ENCODE measurements at regions of chr12 and their contacts with region 1.

Region 1: GRCh38 chr12:56636675-56637540 is 6.8 kb upstream of the BAZ2A start:
- DNase-seq: peak; percentile 98
- ATAC-seq: peak; percentile 63
- H3K4me3 ChIP-seq: peak overlapping the region; percentile 90
- H3K27ac ChIP-seq: peak overlapping the region; percentile 83
- H3K4me1 ChIP-seq: peaks cover 36% of the 10 kb centered on the region
- H3K27me3 ChIP-seq: no peaks in the 10 kb centered on the region
- CTCF ChIP-seq: peak; percentile 81

Region 2: GRCh38 chr12:56521590-56522371 is 115.1 kb before region 1 on chr12 and contains the start of gene RBMS2:
- CTCF ChIA-PET with region 1: interaction called, 8 read pairs
- POLR2A ChIA-PET with region 1: interaction called, 11 read pairs
- intact Hi-C with region 1: no loop called
- DNase-seq: peak; percentile 89
- ATAC-seq: peak; percentile 66
- H3K4me3 ChIP-seq: peak within 1 kb of the TSS; percentile 72
- H3K27ac ChIP-seq: peak within 1 kb of the TSS; percentile 64
- H3K4me1 ChIP-seq: peaks cover 60% of the 10 kb centered on the region
- H3K27me3 ChIP-seq: no peaks in the 10 kb centered on the region
- CTCF ChIP-seq: no peak
- total RNA-seq, gene RBMS2: 10.2 and 11.5 TPM in 2 replicates

Region 3: GRCh38 chr12:56622535-56622934 is 14.4 kb before region 1 on chr12:
- CTCF ChIA-PET with region 1: interaction called, 15 read pairs
- POLR2A ChIA-PET with region 1: no interaction called
- intact Hi-C with region 1: no loop called
- DNase-seq: no peak
- ATAC-seq: no peak
- H3K4me3 ChIP-seq: no peak overlapping the region
- H3K27ac ChIP-seq: no peak overlapping the region
- H3K4me1 ChIP-seq: no peaks in the 10 kb centered on the region
- H3K27me3 ChIP-seq: no peaks in the 10 kb centered on the region
- CTCF ChIP-seq: no peak

Region 4: DNA sequence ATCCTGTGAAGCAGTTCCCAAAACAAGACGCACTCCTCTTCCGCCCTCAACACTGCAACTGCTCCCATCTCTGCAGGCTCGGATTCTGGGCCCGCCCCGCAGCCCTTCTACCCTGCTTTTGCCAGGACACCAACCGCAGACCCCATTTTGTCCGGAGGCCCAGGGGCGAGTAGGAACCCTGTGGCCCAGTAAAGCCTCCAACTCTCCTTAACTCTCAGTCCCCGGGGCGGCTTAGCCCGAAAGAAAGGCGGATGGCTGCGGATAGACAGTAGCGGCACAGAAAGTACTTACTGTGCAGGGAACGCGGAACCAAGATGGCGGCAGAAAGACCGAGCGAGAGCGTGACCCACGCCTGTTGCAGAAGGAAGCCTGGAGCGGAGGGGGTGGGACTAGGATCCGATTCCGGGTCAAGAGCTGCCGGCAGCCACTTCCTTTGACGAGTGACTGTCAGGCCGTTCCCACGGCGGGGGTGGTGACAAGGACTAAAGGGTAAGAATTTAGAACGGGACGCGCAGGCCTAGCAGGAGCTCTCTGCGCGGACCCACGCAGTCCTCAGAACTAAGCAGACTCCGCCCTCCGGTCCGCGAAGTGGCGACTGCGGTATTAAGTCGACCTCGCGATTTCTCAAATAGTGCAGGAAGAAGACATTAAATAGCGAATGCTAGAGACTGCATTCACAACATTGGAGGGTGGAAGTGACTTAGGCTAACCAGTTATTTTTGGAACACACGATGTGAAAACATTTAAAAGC is 88.2 kb after region 1 on chr12 and contains the start of gene NACA:
- CTCF ChIA-PET with region 1: interaction called, 6 read pairs
- POLR2A ChIA-PET with region 1: interaction called, 10 read pairs
- intact Hi-C with region 1: loop called (anchors 2 kb)
- DNase-seq: peak; percentile 97
- ATAC-seq: peak; percentile 94
- H3K4me3 ChIP-seq: peak within 1 kb of the TSS; percentile 88
- H3K27ac ChIP-seq: peak within 1 kb of the TSS; percentile 77
- H3K4me1 ChIP-seq: peaks cover 39% of the 10 kb centered on the region
- H3K27me3 ChIP-seq: no peaks in the 10 kb centered on the region
- CTCF ChIP-seq: no peak
- total RNA-seq, gene NACA: 839 and 1,420 TPM in 2 replicates

Region 5: GRCh38 chr12:57404966-57405640 is 768.2 kb after region 1 on chr12:
- CTCF ChIA-PET with region 1: no interaction called
- POLR2A ChIA-PET with region 1: no interaction called
- intact Hi-C with region 1: no loop called
- DNase-seq: no peak
- ATAC-seq: no peak
- H3K4me3 ChIP-seq: no peak overlapping the region
- H3K27ac ChIP-seq: no peak overlapping the region
- H3K4me1 ChIP-seq: no peaks in the 10 kb centered on the region
- H3K27me3 ChIP-seq: no peaks in the 10 kb centered on the region
- CTCF ChIP-seq: no peak

Measured in PC-3 (cell line).